ENCODE measurements at regions of chr3 and their contacts with region 1.

Region 1: GRCh38 chr3:107945417-107946094 is 145.3 kb downstream of the CD47 start:
- DNase-seq: no peak
- H3K4me3 ChIP-seq: no peak overlapping the region
- H3K27ac ChIP-seq: no peak overlapping the region
- H3K4me1 ChIP-seq: peaks cover 0 to 6% (median 4%) of the 10 kb centered on the region in 4 donors
- H3K27me3 ChIP-seq: no peaks in the 10 kb centered on the region
- CTCF ChIP-seq: no peak

Region 2: GRCh38 chr3:107555359-107555758 is 390.2 kb before region 1 on chr3:
- intact Hi-C with region 1: no loop called
- DNase-seq: no peak
- H3K4me3 ChIP-seq: no peak overlapping the region
- H3K27ac ChIP-seq: no peak overlapping the region
- H3K4me1 ChIP-seq: peaks cover 0 to 23% (median 4%) of the 10 kb centered on the region in 4 donors
- H3K27me3 ChIP-seq: no peaks in the 10 kb centered on the region
- CTCF ChIP-seq: no peak

Region 3: GRCh38 chr3:107833043-107833442 is 112.5 kb before region 1 on chr3:
- intact Hi-C with region 1: no loop called
- DNase-seq: no peak
- H3K4me3 ChIP-seq: no peak overlapping the region
- H3K27ac ChIP-seq: no peak overlapping the region
- H3K4me1 ChIP-seq: peaks cover 0 to under 1% (median 0%) of the 10 kb centered on the region in 4 donors
- H3K27me3 ChIP-seq: no peaks in the 10 kb centered on the region
- CTCF ChIP-seq: no peak

Region 4: DNA sequence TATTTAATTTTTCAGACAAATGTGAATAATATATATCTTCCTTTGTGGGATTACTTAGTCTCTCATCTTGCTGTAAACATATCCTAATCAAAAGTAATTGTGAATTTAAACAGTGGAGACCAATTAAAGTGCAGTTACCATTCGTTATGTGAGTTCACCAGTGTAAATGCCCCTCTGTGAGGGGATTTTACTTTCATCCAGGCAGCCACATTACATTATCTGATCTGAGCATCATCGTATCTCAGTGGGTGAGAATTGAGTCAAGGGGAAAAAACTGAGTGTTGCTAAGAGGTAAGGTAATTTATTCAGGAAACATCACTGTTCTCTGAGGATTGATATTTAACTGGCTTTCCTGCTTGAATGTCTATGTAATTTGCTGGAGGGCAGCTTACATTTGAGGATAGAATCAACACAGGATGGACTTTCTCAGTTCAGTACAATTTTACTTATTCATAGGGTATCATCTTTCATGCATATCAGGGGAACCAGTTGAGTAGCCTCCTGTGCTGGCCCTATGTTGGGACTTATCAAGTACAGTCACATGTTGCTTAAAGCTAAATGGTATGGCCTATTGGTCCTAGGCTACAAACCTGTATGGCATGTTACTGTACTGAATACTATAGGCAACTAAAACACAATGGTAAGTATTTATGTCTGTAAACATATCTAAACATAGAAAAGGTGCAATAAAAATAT is 74.5 kb before region 1 on chr3:
- intact Hi-C with region 1: loop called (anchors 2 kb)
- DNase-seq: no peak
- H3K4me3 ChIP-seq: no peak overlapping the region
- H3K27ac ChIP-seq: no peak overlapping the region
- H3K4me1 ChIP-seq: no peaks in the 10 kb centered on the region
- H3K27me3 ChIP-seq: no peaks in the 10 kb centered on the region
- CTCF ChIP-seq: no peak

Measured in tibial artery (tissue), 4 donors.